AG04450 (cell line): ENCODE measurements at regions of chr1 and their contacts with region 1.

Region 1: DNA sequence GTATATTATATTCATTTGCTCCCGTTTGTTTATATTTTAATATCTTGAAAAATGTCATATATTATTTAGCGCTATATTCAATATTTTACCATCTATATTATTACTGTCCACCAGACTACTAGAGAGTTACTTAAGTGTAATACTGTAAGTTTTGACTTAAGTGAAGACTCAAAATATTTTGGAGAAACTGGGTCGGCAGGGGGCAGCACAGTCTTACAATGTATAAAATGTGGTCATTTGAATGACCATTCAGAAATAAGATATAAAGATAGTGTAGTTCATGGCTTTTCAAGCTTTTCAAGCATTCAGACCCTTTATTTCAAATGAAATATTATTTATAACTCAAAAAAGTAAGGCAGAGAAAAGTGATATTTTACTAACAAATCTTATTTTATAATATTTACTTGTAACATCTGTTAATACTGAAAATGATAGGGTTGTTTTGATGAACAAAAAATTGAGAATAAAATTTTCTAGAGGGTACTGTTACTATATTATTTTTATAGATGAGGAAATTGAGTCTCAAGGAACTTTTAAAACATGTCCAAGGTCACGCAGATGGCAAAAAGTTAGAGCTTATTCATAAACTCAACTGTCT is 89.0 kb upstream of the SERTAD4 start:
- DNase-seq: peak; percentile 51
- H3K4me3 ChIP-seq: no peak overlapping the region
- H3K27ac ChIP-seq: no peak overlapping the region
- H3K27me3 ChIP-seq: no peaks in the 10 kb centered on the region
- CTCF ChIP-seq: peak; percentile 66

Region 2: DNA sequence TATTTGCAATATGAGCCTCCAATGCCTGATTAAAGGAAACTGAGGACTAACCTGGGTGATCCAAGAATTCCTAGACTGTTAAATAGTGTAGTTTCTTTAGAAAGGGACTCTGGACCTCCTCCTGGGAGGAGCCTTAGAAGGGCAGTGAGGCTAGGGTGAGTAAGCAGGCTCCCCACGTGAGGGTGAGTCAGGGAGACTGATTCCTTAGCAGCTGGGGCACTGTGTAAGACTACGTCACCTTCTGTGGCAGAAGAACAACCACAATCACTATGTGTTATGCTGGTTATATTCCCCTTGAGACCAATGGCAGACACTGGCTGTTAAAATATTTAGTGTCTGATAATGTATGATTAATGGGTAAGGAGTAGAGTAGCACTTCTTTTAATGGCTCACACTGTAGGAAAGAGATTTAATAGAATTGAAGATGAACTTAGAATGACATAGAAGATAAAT is 258.9 kb before region 1 on chr1:
- CTCF ChIA-PET with region 1: no interaction called
- POLR2A ChIA-PET with region 1: no interaction called
- DNase-seq: peak; percentile 97
- H3K4me3 ChIP-seq: peak overlapping the region; percentile 25
- H3K27ac ChIP-seq: peak overlapping the region; percentile 92
- H3K27me3 ChIP-seq: no peaks in the 10 kb centered on the region
- CTCF ChIP-seq: no peak

Region 3: DNA sequence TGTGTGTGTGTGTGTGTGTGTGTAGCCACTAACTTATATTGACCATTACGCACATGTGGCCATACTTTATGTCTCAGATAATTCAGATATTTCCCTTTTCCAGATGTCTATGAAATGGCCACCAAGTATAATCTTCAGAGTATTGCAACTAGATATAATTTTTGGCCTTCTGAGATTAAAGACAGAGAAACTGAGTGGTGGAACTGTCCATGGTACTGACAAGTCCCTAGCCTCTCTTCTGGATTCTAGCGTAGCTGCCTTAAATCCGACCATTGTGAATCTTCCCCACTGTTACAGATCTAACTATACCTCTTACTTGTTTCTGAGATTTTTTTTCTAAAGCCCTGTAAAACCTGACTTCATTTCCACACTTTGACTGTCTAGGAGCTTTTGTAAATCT is 11.0 kb before region 1 on chr1:
- CTCF ChIA-PET with region 1: interaction called, 13 read pairs
- POLR2A ChIA-PET with region 1: no interaction called
- DNase-seq: peak; percentile 13
- H3K4me3 ChIP-seq: no peak overlapping the region
- H3K27ac ChIP-seq: no peak overlapping the region
- H3K27me3 ChIP-seq: no peaks in the 10 kb centered on the region
- CTCF ChIP-seq: no peak

Region 4: GRCh38 chr1:210400043-210400840 is 256.7 kb after region 1 on chr1:
- CTCF ChIA-PET with region 1: interaction called, 57 read pairs
- POLR2A ChIA-PET with region 1: no interaction called
- DNase-seq: peak; percentile 33
- H3K4me3 ChIP-seq: no peak overlapping the region
- H3K27ac ChIP-seq: no peak overlapping the region
- H3K27me3 ChIP-seq: no peaks in the 10 kb centered on the region
- CTCF ChIP-seq: peak; percentile 97